Tibial artery (tissue), 4 donors: ENCODE measurements at regions of chr3 and their contacts with region 1.

Region 1: GRCh38 chr3:11271986-11272904 is at the start of gene ATG7:
- DNase-seq: peak; percentile 96 to 98
- H3K4me3 ChIP-seq: peak within 1 kb of the TSS; percentile 71 to 77
- H3K27ac ChIP-seq: peak within 1 kb of the TSS; percentile 77 to 84
- H3K4me1 ChIP-seq: peaks cover 0 to 19% (median 12%) of the 10 kb centered on the region in 4 donors
- H3K27me3 ChIP-seq: no peaks in the 10 kb centered on the region
- CTCF ChIP-seq: peak in 1 of 2 experiments; percentile 41

Region 2: DNA sequence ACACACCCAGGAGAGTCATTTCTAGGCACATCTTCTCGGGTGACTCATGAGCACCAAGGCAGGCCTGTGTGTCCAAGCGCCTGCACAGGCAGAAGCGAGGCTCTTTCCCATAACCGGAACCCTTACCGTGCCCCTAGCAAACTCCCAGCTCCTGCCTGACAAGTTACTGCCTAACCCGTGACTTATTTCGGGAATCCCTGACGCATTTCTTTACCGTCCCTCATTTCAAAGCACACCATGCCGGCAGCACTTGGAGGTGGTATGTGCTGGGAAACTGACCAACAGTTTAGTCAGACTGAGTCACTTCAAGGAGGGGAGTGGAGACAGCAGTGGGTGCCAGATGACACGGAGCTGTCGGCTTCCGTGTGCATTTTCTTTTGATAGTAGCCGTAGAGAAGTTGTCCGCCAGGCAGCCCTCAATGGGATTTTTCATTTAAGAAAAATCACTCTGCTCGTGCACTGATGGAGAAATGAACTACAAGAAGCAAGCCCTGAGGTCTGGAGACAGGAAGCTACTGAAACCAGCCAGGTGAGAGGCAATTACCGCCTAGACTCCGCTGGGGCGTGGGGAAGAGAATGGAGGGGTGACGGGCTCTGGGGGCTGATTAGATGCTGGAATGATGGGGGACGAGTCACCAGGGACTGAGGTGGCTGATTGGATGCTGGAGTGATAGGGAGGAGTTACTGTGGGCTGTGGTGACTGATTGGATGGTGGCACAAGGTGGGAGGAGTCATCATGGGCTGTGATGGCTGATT is 135.2 kb before region 1 on chr3:
- intact Hi-C with region 1: loop called (anchors 10 kb)
- DNase-seq: peak; percentile 82 to 93
- H3K4me3 ChIP-seq: peak overlapping the region; percentile 39 to 45
- H3K27ac ChIP-seq: peak overlapping the region; percentile 79 to 86
- H3K4me1 ChIP-seq: peaks cover 0 to 34% (median 17%) of the 10 kb centered on the region in 4 donors
- H3K27me3 ChIP-seq: no peaks in the 10 kb centered on the region
- CTCF ChIP-seq: peak in 1 of 2 experiments; percentile 11